ENCODE measurements at regions of chr16 and their contacts with region 1.

Region 1: GRCh38 chr16:58638148-58639036 is 8.8 kb upstream of the CNOT1 start:
- DNase-seq: peak; percentile 86 to 87
- H3K4me3 ChIP-seq: no peak overlapping the region
- H3K4me3 Mint-ChIP-seq: peak overlapping the region; percentile 6
- H3K27ac Mint-ChIP-seq: peak overlapping the region; percentile 73
- H3K4me1 ChIP-seq: peaks cover 30% of the 10 kb centered on the region
- H3K4me1 Mint-ChIP-seq: peaks cover 30% of the 10 kb centered on the region
- H3K27me3 ChIP-seq: no peaks in the 10 kb centered on the region
- H3K27me3 Mint-ChIP-seq: no peaks in the 10 kb centered on the region
- CTCF ChIP-seq: peak; percentile 49 to 83

Region 2: GRCh38 chr16:58494981-58495520 is 143.3 kb before region 1 on chr16:
- CTCF ChIA-PET with region 1: no interaction called
- POLR2A ChIA-PET with region 1: no interaction called
- intact Hi-C with region 1: loop called (anchors 1 kb)
- DNase-seq: peak; percentile 87 to 90
- H3K4me3 ChIP-seq: no peak overlapping the region
- H3K4me3 Mint-ChIP-seq: no peak overlapping the region
- H3K27ac Mint-ChIP-seq: peak overlapping the region; percentile 80
- H3K4me1 ChIP-seq: peaks cover under 1% of the 10 kb centered on the region
- H3K4me1 Mint-ChIP-seq: no peaks in the 10 kb centered on the region
- H3K27me3 ChIP-seq: no peaks in the 10 kb centered on the region
- H3K27me3 Mint-ChIP-seq: peaks cover 4% of the 10 kb centered on the region
- CTCF ChIP-seq: peak; percentile 40 to 67

Region 3: GRCh38 chr16:58501242-58502131 is 136.9 kb before region 1 on chr16:
- CTCF ChIA-PET with region 1: no interaction called
- POLR2A ChIA-PET with region 1: no interaction called
- intact Hi-C with region 1: loop called (anchors 1 kb)
- DNase-seq: peak; percentile 74 to 86
- H3K4me3 ChIP-seq: peak overlapping the region; percentile 63
- H3K4me3 Mint-ChIP-seq: peak overlapping the region; percentile 88
- H3K27ac Mint-ChIP-seq: peak overlapping the region; percentile 86
- H3K4me1 ChIP-seq: peaks cover 7% of the 10 kb centered on the region
- H3K4me1 Mint-ChIP-seq: no peaks in the 10 kb centered on the region
- H3K27me3 ChIP-seq: no peaks in the 10 kb centered on the region
- H3K27me3 Mint-ChIP-seq: no peaks in the 10 kb centered on the region
- CTCF ChIP-seq: no peak

Region 4: GRCh38 chr16:58515125-58515870 is 123.1 kb before region 1 on chr16 and contains the start of gene SETD6:
- CTCF ChIA-PET with region 1: interaction called, 3 read pairs
- POLR2A ChIA-PET with region 1: interaction called, 3 read pairs
- intact Hi-C with region 1: loop called (anchors 1 kb)
- DNase-seq: peak; percentile 91 to 95
- H3K4me3 ChIP-seq: peak within 1 kb of the TSS; percentile 88
- H3K4me3 Mint-ChIP-seq: peak within 1 kb of the TSS; percentile 93
- H3K27ac Mint-ChIP-seq: peak within 1 kb of the TSS; percentile 97
- H3K4me1 ChIP-seq: peaks cover 18% of the 10 kb centered on the region
- H3K4me1 Mint-ChIP-seq: peaks cover 43% of the 10 kb centered on the region
- H3K27me3 ChIP-seq: no peaks in the 10 kb centered on the region
- H3K27me3 Mint-ChIP-seq: no peaks in the 10 kb centered on the region
- CTCF ChIP-seq: peak; percentile 16 to 36
- total RNA-seq, gene SETD6: 34.9 and 41.7 TPM in 2 replicates

Region 5: GRCh38 chr16:58699151-58699550 is 60.8 kb after region 1 on chr16:
- CTCF ChIA-PET with region 1: no interaction called
- POLR2A ChIA-PET with region 1: no interaction called
- intact Hi-C with region 1: no loop called
- DNase-seq: no peak
- H3K4me3 ChIP-seq: no peak overlapping the region
- H3K4me3 Mint-ChIP-seq: no peak overlapping the region
- H3K27ac Mint-ChIP-seq: no peak overlapping the region
- H3K4me1 ChIP-seq: peaks cover 3% of the 10 kb centered on the region; the same call in 1 of the 2 replicates
- H3K4me1 Mint-ChIP-seq: no peaks in the 10 kb centered on the region
- H3K27me3 ChIP-seq: no peaks in the 10 kb centered on the region
- H3K27me3 Mint-ChIP-seq: no peaks in the 10 kb centered on the region
- CTCF ChIP-seq: no peak